ENCODE measurements at regions of chr15 and their contacts with region 1.

Region 1: DNA sequence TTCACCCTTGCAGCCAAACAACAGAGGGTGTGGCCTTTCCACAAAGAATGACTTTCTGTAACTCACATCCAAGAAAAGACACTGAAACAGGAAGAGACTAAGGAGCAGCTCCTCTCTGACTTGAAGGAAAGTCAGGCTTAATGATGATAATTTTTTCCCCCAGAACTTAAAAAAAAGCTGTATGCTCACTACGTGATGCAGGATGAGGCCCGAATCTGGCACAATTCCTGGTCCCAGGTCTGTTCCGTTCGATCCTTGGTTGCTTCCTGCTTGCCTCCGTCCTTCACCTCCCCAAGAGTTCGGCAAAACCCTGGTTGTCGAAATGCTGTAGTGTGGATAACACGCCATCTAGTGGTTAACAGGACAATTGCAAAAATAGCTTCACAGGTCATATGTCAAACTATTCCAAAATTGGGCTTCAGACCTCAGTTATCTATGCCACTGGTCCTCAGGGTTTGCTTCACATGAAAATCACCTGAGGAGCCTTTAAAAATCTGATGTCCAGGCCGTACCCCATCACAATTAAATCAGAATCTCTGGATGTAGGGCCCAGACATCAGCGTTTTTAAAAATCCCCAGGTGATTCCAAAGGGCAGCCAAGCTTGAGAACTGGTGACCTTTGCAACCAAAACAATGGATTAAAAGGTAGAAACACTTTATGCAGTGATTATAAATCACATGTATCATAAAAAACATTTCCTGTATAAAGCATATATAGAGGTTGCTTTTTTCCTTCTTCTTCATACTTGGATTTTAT is 28.1 kb upstream of the SYNM start:
- DNase-seq: peak; percentile 47
- ATAC-seq: peak; percentile 93 to 94
- H3K4me3 ChIP-seq: peak overlapping the region; percentile 36 to 53 (median 41)
- H3K27ac ChIP-seq: no peak overlapping the region
- H3K4me1 ChIP-seq: no peaks in the 10 kb centered on the region
- H3K27me3 ChIP-seq: no peaks in the 10 kb centered on the region
- CTCF ChIP-seq: peak; percentile 70 to 94 (median 89)
- POLR2A ChIP-seq: no peak

Region 2: GRCh38 chr15:98442379-98442833 is 634.3 kb before region 1 on chr15:
- in situ Hi-C with region 1: loop called in 1 of 4 experiments (anchors 10 kb)
- intact Hi-C with region 1: loop called (anchors 2 kb)
- DNase-seq: no peak
- ATAC-seq: no peak
- H3K4me3 ChIP-seq: no peak overlapping the region
- H3K27ac ChIP-seq: no peak overlapping the region
- H3K4me1 ChIP-seq: no peaks in the 10 kb centered on the region
- H3K27me3 ChIP-seq: peaks cover 0 to 5% (median 0%) of the 10 kb centered on the region in 3 donors
- CTCF ChIP-seq: peak; percentile 18 to 73 (median 53)
- POLR2A ChIP-seq: no peak

Region 3: DNA sequence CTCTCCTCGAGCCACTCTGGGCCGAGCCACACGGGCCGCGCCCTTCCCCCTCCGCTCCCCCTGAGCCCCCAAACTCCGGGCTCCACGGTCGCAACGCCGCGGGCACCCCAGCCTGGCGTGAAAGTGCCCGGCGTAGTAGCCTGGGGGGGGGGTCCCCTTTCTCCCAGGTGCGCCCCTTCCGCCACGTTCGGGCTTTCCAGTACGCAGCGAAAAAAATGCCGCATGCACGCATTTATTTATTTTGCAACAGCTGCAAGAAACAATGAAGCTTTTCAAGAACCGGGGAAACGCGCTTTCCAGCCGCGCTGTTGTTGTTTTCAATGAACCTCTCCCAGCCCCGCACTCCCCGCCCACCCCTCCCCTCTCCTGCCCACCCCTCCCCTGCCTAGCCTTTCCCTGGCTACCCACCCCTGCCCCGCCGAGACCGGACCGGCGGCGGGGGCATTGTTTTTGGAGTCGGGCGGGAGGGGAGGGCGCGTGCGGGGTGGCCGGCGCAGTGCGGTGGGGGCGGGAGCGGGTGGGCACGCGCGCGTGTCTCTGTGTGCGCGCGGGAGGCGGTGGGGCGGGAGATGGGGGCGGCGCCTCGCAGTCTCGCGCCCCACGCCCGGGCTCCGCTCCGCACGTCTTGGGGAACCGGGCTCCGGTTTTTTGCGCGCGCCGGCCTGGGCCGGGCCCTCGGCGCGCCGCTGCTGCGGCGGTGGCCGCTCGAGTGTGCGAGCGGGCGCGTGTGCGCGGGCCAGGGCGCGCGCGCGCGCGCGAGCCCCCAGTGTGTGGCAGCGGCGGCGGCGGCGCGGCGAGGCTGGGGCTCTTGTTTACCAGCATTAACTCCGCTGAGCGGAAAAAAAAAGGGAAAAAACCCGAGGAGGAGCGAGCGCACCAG is 428.7 kb before region 1 on chr15 and contains the start of gene IGF1R:
- in situ Hi-C with region 1: loop called (anchors 25 kb)
- intact Hi-C with region 1: loop called (anchors 5 kb)
- DNase-seq: peak; percentile 62 to 72
- ATAC-seq: peak; percentile 83 to 84
- H3K4me3 ChIP-seq: peak within 1 kb of the TSS; percentile 80 to 97 (median 88)
- H3K27ac ChIP-seq: peak within 1 kb of the TSS; percentile 86 to 92 (median 90)
- H3K4me1 ChIP-seq: peaks cover 0 to 7% of the 10 kb centered on the region in 2 donors
- H3K27me3 ChIP-seq: peaks cover 12 to 34% (median 28%) of the 10 kb centered on the region in 3 donors
- CTCF ChIP-seq: peak in 4 of 5 experiments; percentile 17 to 49 (median 25)
- POLR2A ChIP-seq: peak; percentile 70 to 85
- total RNA-seq, gene IGF1R: 10.1 to 50.4 (median 12.3) TPM

Region 4: GRCh38 chr15:98779463-98780071 is 297.2 kb before region 1 on chr15:
- in situ Hi-C with region 1: loop called in 3 of 4 experiments (anchors 5 to 10 kb)
- intact Hi-C with region 1: loop called (anchors 1 kb)
- DNase-seq: peak; percentile 60 to 73
- ATAC-seq: peak; percentile 97 to 99
- H3K4me3 ChIP-seq: peak overlapping the region in 1 of 4 donors; percentile 27
- H3K27ac ChIP-seq: no peak overlapping the region
- H3K4me1 ChIP-seq: peaks cover 8 to 11% of the 10 kb centered on the region in 2 donors
- H3K27me3 ChIP-seq: no peaks in the 10 kb centered on the region
- CTCF ChIP-seq: peak; percentile 77 to 96 (median 87)
- POLR2A ChIP-seq: no peak

Region 5: GRCh38 chr15:98881526-98882520 is 194.9 kb before region 1 on chr15:
- in situ Hi-C with region 1: no loop called
- intact Hi-C with region 1: loop called (anchors 5 kb)
- DNase-seq: peak in 1 of 2 donors; percentile 33
- ATAC-seq: peak in 1 of 2 donors; percentile 57
- H3K4me3 ChIP-seq: no peak overlapping the region
- H3K27ac ChIP-seq: no peak overlapping the region
- H3K4me1 ChIP-seq: peaks cover 9 to 25% of the 10 kb centered on the region in 2 donors
- H3K27me3 ChIP-seq: no peaks in the 10 kb centered on the region
- CTCF ChIP-seq: peak; percentile 41 to 56 (median 47)
- POLR2A ChIP-seq: no peak

Region 6: GRCh38 chr15:99009741-99010370 is 66.9 kb before region 1 on chr15:
- in situ Hi-C with region 1: no loop called
- intact Hi-C with region 1: no loop called
- DNase-seq: no peak
- ATAC-seq: no peak
- H3K4me3 ChIP-seq: no peak overlapping the region
- H3K27ac ChIP-seq: peak overlapping the region in 2 of 4 donors; percentile 1 to 24
- H3K4me1 ChIP-seq: peaks cover 10 to 13% of the 10 kb centered on the region in 2 donors
- H3K27me3 ChIP-seq: no peaks in the 10 kb centered on the region
- CTCF ChIP-seq: no peak
- POLR2A ChIP-seq: no peak

Region 7: DNA sequence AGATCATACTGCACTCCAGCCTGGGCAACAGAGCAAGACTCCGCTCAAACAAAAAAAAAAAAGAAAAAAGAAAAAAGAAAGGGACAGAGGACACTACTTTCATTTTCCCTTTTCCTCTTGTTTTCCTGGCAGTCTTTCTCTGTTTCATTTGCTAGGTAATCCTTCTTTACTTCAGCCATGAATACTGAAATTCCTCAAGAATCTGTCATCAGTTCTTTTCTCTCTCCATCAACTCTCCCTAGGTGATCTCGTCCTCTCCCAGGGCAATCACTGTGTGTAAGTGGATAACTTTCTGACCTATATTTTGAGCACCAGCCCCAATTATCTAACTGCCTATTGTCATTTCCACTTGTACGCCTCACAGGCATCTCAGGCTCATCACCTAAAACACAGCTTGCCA is 121.1 kb after region 1 on chr15:
- in situ Hi-C with region 1: no loop called
- intact Hi-C with region 1: no loop called
- DNase-seq: no peak
- ATAC-seq: no peak
- H3K4me3 ChIP-seq: no peak overlapping the region
- H3K27ac ChIP-seq: no peak overlapping the region
- H3K4me1 ChIP-seq: no peaks in the 10 kb centered on the region
- H3K27me3 ChIP-seq: no peaks in the 10 kb centered on the region
- CTCF ChIP-seq: no peak
- POLR2A ChIP-seq: no peak